ENCODE measurements at regions of chr13 and their contacts with region 1.

Region 1: GRCh38 chr13:99087096-99087953 is 109.5 kb upstream of the DOCK9 start:
- DNase-seq: peak; percentile 91
- H3K4me3 ChIP-seq: peak overlapping the region; percentile 84
- H3K27ac ChIP-seq: peak overlapping the region; percentile 96 to 97
- H3K4me1 ChIP-seq: peaks cover 4% of the 10 kb centered on the region
- H3K27me3 ChIP-seq: no peaks in the 10 kb centered on the region
- CTCF ChIP-seq: peak in 2 of 4 experiments; percentile 30 to 45
- POLR2A ChIP-seq: peak; percentile 90

Region 2: GRCh38 chr13:99200432-99201167 is 113.3 kb after region 1 on chr13 and contains the start of gene UBAC2:
- intact Hi-C with region 1: loop called (anchors 5 kb)
- DNase-seq: peak; percentile 91
- H3K4me3 ChIP-seq: peak within 1 kb of the TSS; percentile 68 to 89
- H3K27ac ChIP-seq: peak within 1 kb of the TSS; percentile 97
- H3K4me1 ChIP-seq: peaks cover 8% of the 10 kb centered on the region
- H3K27me3 ChIP-seq: no peaks in the 10 kb centered on the region
- CTCF ChIP-seq: peak in 2 of 4 experiments; percentile 30 to 46
- POLR2A ChIP-seq: peak; percentile 96
- total RNA-seq, gene UBAC2: 60.7 to 86.9 TPM